ENCODE measurements at regions of chr3 and their contacts with region 1.

Region 1: GRCh38 chr3:106635271-106635670 is 742.0 kb upstream of the CCDC54 start:
- DNase-seq: peak; percentile 90
- H3K4me3 ChIP-seq: no peak overlapping the region
- H3K27ac ChIP-seq: peak overlapping the region; percentile 69
- H3K4me1 ChIP-seq: peaks cover 13% of the 10 kb centered on the region
- H3K27me3 ChIP-seq: no peaks in the 10 kb centered on the region
- CTCF ChIP-seq: no peak

Region 2: GRCh38 chr3:106401666-106402490 is 233.4 kb before region 1 on chr3:
- CTCF ChIA-PET with region 1: no interaction called
- dilution Hi-C with region 1: no loop called
- in situ Hi-C with region 1: no loop called
- intact Hi-C with region 1: no loop called
- DNase-seq: peak; percentile 4
- H3K4me3 ChIP-seq: no peak overlapping the region
- H3K27ac ChIP-seq: no peak overlapping the region
- H3K4me1 ChIP-seq: no peaks in the 10 kb centered on the region
- H3K27me3 ChIP-seq: peaks cover 3% of the 10 kb centered on the region
- CTCF ChIP-seq: no peak

Region 3: GRCh38 chr3:106688463-106688862 is 53.2 kb after region 1 on chr3:
- CTCF ChIA-PET with region 1: no interaction called
- dilution Hi-C with region 1: no loop called
- in situ Hi-C with region 1: no loop called
- intact Hi-C with region 1: loop called (anchors 2 kb)
- DNase-seq: peak; percentile 88
- H3K4me3 ChIP-seq: no peak overlapping the region
- H3K27ac ChIP-seq: no peak overlapping the region
- H3K4me1 ChIP-seq: peaks cover 20% of the 10 kb centered on the region
- H3K27me3 ChIP-seq: no peaks in the 10 kb centered on the region
- CTCF ChIP-seq: no peak

Region 4: DNA sequence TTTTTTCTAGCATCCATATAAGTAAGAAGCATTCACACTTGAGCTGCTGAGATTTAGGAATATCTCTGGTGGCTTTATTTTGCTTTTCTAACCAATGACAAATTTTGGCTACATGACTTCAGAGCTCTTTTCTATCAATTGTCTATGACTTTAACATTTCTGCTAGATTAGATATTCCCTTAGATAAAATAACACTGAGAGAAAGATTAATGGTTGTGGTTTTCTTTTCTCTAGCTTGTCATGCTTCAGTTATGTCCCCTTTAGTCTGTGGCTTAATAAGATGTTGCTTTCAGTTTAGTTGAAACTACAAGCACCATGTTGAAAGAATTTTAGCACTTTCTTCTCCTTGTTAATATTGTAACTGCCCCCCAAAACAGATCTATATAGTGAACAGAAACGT is 76.4 kb after region 1 on chr3:
- CTCF ChIA-PET with region 1: no interaction called
- dilution Hi-C with region 1: no loop called
- in situ Hi-C with region 1: no loop called
- intact Hi-C with region 1: no loop called
- DNase-seq: peak; percentile 12
- H3K4me3 ChIP-seq: no peak overlapping the region
- H3K27ac ChIP-seq: no peak overlapping the region
- H3K4me1 ChIP-seq: no peaks in the 10 kb centered on the region
- H3K27me3 ChIP-seq: no peaks in the 10 kb centered on the region
- CTCF ChIP-seq: no peak

Region 5: DNA sequence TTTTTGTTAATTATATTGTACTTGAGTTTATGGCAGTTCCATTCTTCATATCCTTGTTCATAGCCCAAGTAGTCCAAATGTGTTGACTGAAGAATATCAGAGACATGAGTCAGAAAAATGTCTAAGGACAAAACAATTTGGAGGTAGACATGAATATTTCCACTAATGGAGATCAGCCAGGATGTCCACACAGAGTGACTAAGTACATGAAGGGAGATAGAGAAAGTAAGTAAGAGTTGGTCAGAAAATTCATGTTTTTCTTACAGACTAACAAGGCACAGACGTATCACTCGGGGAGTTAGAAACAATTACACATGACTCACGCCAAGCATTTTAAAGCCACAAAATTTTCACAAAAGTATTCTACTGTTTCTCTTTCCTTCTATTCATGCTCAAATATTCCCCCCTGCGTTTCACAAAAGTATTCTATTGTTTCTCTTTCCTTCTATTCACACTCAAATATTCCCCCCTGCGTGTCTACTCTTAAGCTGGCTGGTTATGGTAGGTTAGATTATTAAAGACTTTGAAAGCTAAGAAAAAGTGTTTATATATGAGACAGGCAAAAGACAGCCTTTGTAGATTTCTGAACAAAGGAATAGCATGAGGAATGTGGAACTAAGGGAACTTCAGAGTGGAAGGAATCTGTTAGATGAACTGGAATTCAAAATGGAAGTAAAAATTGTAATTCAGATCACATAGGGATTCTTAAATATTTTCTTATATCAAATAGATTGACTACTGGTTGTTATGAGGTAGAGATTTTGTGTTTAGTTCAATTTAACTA is 93.2 kb after region 1 on chr3:
- CTCF ChIA-PET with region 1: no interaction called
- dilution Hi-C with region 1: no loop called
- in situ Hi-C with region 1: no loop called
- intact Hi-C with region 1: loop called (anchors 1 kb)
- DNase-seq: peak; percentile 95
- H3K4me3 ChIP-seq: peak overlapping the region; percentile 11 to 24 (median 16)
- H3K27ac ChIP-seq: peak overlapping the region; percentile 94
- H3K4me1 ChIP-seq: peaks cover 29% of the 10 kb centered on the region
- H3K27me3 ChIP-seq: no peaks in the 10 kb centered on the region
- CTCF ChIP-seq: no peak

Region 6: GRCh38 chr3:106765342-106765741 is 130.1 kb after region 1 on chr3:
- CTCF ChIA-PET with region 1: no interaction called
- dilution Hi-C with region 1: no loop called
- in situ Hi-C with region 1: no loop called
- intact Hi-C with region 1: loop called (anchors 2 kb)
- DNase-seq: peak; percentile 98
- H3K4me3 ChIP-seq: no peak overlapping the region
- H3K27ac ChIP-seq: peak overlapping the region; percentile 81
- H3K4me1 ChIP-seq: peaks cover 11% of the 10 kb centered on the region
- H3K27me3 ChIP-seq: no peaks in the 10 kb centered on the region
- CTCF ChIP-seq: no peak

Region 7: GRCh38 chr3:106824856-106825255 is 189.6 kb after region 1 on chr3:
- CTCF ChIA-PET with region 1: no interaction called
- dilution Hi-C with region 1: no loop called
- in situ Hi-C with region 1: loop called in 1 of 2 experiments (anchors 25 kb)
- intact Hi-C with region 1: no loop called
- DNase-seq: peak; percentile 49
- H3K4me3 ChIP-seq: no peak overlapping the region
- H3K27ac ChIP-seq: no peak overlapping the region
- H3K4me1 ChIP-seq: peaks cover 6% of the 10 kb centered on the region
- H3K27me3 ChIP-seq: no peaks in the 10 kb centered on the region
- CTCF ChIP-seq: peak in 1 of 2 donors; percentile 42